ENCODE measurements at regions of chr19 and their contacts with region 1.

Region 1: DNA sequence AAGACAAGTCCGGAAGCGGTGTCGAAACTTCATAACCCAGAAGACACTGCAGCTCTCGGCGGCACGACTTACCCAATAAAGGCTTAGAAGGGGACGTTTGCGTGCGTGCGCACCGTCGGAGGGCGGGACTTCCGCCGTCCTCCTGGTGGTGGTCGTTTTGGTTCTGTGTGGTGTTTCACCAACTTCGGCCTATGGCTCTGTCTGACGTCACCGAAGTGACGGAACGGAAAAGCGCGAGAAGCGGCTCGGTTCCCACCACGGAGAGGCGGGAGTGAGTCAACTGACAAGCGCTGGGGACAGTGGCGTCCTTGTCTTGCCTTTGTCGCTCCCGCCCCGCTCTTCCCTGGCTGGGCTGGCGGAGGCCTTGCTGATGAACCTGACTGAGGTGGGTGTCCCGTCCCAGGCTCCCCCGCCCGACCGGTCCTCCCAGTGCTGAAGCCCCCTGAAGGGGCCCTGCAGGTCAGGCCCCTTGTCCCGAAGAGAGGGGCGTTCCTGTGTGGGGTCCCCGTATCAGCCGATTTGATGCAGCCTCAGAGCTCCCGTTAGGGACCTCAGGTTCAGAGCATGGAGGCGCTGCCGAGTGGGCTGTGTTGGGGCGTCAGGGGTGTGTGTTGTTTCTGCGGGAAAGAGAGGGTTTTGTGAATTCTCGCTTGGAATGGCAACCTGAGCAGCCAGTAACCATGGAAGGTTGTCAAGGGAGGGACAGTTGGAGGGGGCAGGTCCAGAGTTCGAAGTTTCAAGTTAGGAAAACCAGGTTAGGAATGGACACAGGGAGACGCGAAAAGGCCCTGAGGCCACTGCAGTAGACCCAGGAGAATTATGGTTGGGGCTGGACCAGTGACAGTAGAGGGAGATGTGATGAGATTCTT is at the start of gene ZNF548:
- DNase-seq: peak; percentile 96
- ATAC-seq: peak; percentile 98
- H3K4me3 Mint-ChIP-seq: peak within 1 kb of the TSS; percentile 94
- H3K27ac Mint-ChIP-seq: peak within 1 kb of the TSS; percentile 91
- H3K4me1 Mint-ChIP-seq: peaks cover 34% of the 10 kb centered on the region
- H3K27me3 Mint-ChIP-seq: no peaks in the 10 kb centered on the region
- CTCF ChIP-seq: no peak
- total RNA-seq, gene ZNF548: 38.7 and 39.7 TPM in 2 replicates

Region 2: DNA sequence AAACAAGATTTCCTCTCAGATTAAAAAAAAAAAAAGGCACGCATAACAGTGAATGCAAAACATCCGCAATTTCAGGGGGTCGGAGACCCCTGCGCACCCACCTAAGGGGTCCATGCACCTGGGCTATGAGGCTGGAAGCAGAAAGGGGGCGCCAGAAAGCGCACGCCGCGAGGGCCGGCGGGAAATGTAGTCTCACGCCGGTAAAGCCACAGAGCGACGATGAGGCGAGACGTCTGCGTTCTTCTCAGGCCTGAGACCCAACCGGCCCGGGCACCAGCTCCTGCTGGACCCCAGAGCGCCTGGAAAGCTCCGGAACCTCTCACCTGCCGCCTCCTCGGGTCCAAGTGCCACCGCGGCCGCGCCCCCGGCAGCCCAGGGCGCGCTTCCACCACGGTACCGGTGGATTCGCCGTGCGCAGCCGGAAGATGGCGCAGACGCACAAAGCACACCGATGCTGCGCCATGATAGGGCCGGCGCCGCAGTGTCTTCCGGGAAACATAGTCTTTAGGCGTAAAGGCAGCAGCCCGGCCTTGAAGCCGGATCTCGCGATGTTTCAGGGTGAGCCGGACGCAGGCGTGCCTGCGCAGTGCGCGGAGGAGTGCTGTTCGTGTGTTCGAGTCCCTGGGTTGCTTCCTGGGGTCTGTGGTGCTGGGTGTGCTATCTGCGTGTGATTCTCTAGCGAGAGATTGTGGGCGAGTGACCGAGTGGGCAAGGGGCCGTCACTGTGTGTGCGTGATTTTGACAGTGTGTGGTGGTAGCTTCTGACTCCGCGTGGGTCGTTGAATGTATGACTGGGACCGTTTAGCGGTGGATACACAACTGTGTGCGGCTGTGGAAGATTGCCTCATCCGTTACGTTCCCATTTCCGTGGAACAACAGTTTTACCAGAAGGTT is 996.6 kb before region 1 on chr19 and contains the start of gene ZNF582:
- CTCF ChIA-PET with region 1: no interaction called
- POLR2A ChIA-PET with region 1: no interaction called
- intact Hi-C with region 1: loop called (anchors 1 kb)
- DNase-seq: peak; percentile 85
- ATAC-seq: peak; percentile 96
- H3K4me3 Mint-ChIP-seq: peak within 1 kb of the TSS; percentile 97
- H3K27ac Mint-ChIP-seq: peak within 1 kb of the TSS; percentile 96
- H3K4me1 Mint-ChIP-seq: peaks cover 13% of the 10 kb centered on the region
- H3K27me3 Mint-ChIP-seq: no peaks in the 10 kb centered on the region
- CTCF ChIP-seq: no peak
- total RNA-seq, gene ZNF582: 7.4 and 7.9 TPM in 2 replicates

Region 3: GRCh38 chr19:57240311-57241090 is 149.5 kb before region 1 on chr19 and contains the start of gene ZNF805:
- CTCF ChIA-PET with region 1: no interaction called
- POLR2A ChIA-PET with region 1: interaction called, 10 read pairs
- intact Hi-C with region 1: no loop called
- DNase-seq: peak; percentile 90
- ATAC-seq: peak; percentile 93
- H3K4me3 Mint-ChIP-seq: peak within 1 kb of the TSS; percentile 95
- H3K27ac Mint-ChIP-seq: peak within 1 kb of the TSS; percentile 93
- H3K4me1 Mint-ChIP-seq: peaks cover 39% of the 10 kb centered on the region
- H3K27me3 Mint-ChIP-seq: no peaks in the 10 kb centered on the region
- CTCF ChIP-seq: no peak
- total RNA-seq, gene ZNF805: 20.3 and 25.9 TPM in 2 replicates

Region 4: GRCh38 chr19:57350877-57351805 is 38.8 kb before region 1 on chr19 and contains the start of gene ZNF304:
- CTCF ChIA-PET with region 1: no interaction called
- POLR2A ChIA-PET with region 1: interaction called, 10 read pairs
- intact Hi-C with region 1: loop called (anchors 5 kb)
- DNase-seq: peak; percentile 66
- ATAC-seq: peak; percentile 100
- H3K4me3 Mint-ChIP-seq: peak within 1 kb of the TSS; percentile 94
- H3K27ac Mint-ChIP-seq: peak within 1 kb of the TSS; percentile 78
- H3K4me1 Mint-ChIP-seq: peaks cover 33% of the 10 kb centered on the region
- H3K27me3 Mint-ChIP-seq: peaks cover 3% of the 10 kb centered on the region
- CTCF ChIP-seq: no peak
- total RNA-seq, gene ZNF304: 12.4 and 13.5 TPM in 2 replicates

Region 5: GRCh38 chr19:57435062-57435978 is 45.4 kb after region 1 on chr19 and contains the start of gene ZNF749:
- CTCF ChIA-PET with region 1: no interaction called
- POLR2A ChIA-PET with region 1: no interaction called
- intact Hi-C with region 1: loop called (anchors 1 kb)
- DNase-seq: peak; percentile 84
- ATAC-seq: peak; percentile 99
- H3K4me3 Mint-ChIP-seq: peak within 1 kb of the TSS; percentile 97
- H3K27ac Mint-ChIP-seq: peak within 1 kb of the TSS; percentile 84
- H3K4me1 Mint-ChIP-seq: peaks cover 25% of the 10 kb centered on the region
- H3K27me3 Mint-ChIP-seq: no peaks in the 10 kb centered on the region
- CTCF ChIP-seq: no peak
- total RNA-seq, gene ZNF749: 16.4 and 18.2 TPM in 2 replicates

Region 6: GRCh38 chr19:57578487-57579205 is 188.7 kb after region 1 on chr19 and contains the start of gene ZNF416:
- CTCF ChIA-PET with region 1: no interaction called
- POLR2A ChIA-PET with region 1: no interaction called
- intact Hi-C with region 1: loop called (anchors 1 kb)
- DNase-seq: peak; percentile 79
- ATAC-seq: peak; percentile 92
- H3K4me3 Mint-ChIP-seq: peak within 1 kb of the TSS; percentile 86
- H3K27ac Mint-ChIP-seq: peak within 1 kb of the TSS; percentile 84
- H3K4me1 Mint-ChIP-seq: peaks cover 32% of the 10 kb centered on the region
- H3K27me3 Mint-ChIP-seq: no peaks in the 10 kb centered on the region
- CTCF ChIP-seq: no peak
- total RNA-seq, gene ZNF416: 12.6 and 13.8 TPM in 2 replicates

Region 7: GRCh38 chr19:58305065-58305931 is 915.3 kb after region 1 on chr19 and contains the start of gene ERVK3-1:
- CTCF ChIA-PET with region 1: no interaction called
- POLR2A ChIA-PET with region 1: no interaction called
- intact Hi-C with region 1: loop called (anchors 1 kb)
- DNase-seq: peak; percentile 89
- ATAC-seq: peak; percentile 97
- H3K4me3 Mint-ChIP-seq: peak within 1 kb of the TSS; percentile 100
- H3K27ac Mint-ChIP-seq: peak within 1 kb of the TSS; percentile 98
- H3K4me1 Mint-ChIP-seq: peaks cover 38% of the 10 kb centered on the region
- H3K27me3 Mint-ChIP-seq: no peaks in the 10 kb centered on the region
- CTCF ChIP-seq: no peak
- total RNA-seq, gene ERVK3-1: 61.4 and 74.3 TPM in 2 replicates